Right cardiac atrium (tissue), 5 donors: ENCODE measurements at regions of chr7 and their contacts with region 1.

Region 1: DNA sequence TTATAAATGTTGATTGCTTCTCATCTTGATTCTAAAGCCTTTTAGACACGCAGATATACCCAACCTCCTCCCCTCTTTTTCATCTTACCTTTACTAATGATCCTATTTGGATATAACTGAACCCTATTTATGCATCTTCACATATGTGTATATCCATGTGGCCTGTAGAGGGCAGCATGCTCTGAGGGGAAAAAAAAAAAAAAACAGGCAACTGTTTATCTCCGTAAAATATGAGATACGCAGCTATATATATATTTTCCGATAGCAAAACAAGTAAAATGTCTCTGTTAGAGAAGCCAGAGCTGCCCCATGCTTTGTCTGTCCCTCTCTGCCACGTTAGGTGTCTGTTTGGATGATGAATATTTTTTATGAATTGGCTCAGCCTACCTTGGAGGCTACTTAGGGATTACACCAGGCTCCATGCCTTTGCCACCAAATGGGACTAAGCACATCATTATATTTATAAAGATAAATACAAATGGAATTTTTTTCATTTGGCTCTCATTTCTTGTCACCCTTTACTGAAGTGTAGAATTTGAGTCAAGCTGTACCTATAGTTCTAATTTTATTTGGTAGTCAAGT is 174.8 kb upstream of the FZD1 start:
- DNase-seq: no peak
- ATAC-seq: peak; percentile 46 to 62
- H3K4me3 ChIP-seq: peak overlapping the region; percentile 69
- H3K27ac ChIP-seq: peak overlapping the region; percentile 67
- H3K4me1 ChIP-seq: peaks cover 2% of the 10 kb centered on the region
- H3K27me3 ChIP-seq: no peaks in the 10 kb centered on the region

Region 2: DNA sequence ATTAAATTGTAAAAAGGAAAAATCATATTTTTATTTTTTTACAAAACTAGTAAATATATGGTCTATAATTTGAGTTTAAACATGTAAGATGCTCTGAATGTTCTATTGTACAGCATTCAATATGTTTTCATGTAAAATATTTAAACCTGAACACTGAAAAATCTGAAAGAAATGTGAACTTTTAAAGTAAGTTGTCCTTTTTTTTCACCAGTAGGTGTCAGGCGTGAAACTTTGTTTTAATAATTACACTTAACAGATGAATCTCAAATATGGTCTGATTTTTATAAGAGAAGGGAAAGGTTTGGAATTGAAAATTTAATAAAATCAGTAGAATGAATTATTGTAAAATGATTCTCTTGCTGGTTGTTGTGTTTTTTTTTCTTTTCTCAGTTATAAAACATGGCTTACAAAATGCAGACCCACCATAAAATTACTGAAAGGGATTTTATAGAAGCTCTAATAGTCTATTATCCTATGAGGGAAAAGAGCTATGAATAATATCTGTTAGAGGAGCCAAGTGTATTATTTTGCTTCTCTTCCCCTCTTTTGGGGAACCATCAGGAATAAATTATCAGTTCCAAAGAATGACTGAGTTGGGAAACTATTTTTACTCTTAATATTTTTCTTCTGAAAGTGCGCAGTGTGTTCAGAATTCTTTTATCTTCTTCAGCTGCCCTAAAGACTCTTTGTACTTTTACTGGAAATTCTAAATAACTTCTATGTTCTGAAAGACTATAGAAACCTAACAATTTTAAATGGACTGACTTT is 43.0 kb before region 1 on chr7:
- intact Hi-C with region 1: no loop called
- DNase-seq: no peak
- ATAC-seq: no peak
- H3K4me3 ChIP-seq: no peak overlapping the region
- H3K27ac ChIP-seq: no peak overlapping the region
- H3K4me1 ChIP-seq: peaks cover 2% of the 10 kb centered on the region
- H3K27me3 ChIP-seq: no peaks in the 10 kb centered on the region

Region 3: DNA sequence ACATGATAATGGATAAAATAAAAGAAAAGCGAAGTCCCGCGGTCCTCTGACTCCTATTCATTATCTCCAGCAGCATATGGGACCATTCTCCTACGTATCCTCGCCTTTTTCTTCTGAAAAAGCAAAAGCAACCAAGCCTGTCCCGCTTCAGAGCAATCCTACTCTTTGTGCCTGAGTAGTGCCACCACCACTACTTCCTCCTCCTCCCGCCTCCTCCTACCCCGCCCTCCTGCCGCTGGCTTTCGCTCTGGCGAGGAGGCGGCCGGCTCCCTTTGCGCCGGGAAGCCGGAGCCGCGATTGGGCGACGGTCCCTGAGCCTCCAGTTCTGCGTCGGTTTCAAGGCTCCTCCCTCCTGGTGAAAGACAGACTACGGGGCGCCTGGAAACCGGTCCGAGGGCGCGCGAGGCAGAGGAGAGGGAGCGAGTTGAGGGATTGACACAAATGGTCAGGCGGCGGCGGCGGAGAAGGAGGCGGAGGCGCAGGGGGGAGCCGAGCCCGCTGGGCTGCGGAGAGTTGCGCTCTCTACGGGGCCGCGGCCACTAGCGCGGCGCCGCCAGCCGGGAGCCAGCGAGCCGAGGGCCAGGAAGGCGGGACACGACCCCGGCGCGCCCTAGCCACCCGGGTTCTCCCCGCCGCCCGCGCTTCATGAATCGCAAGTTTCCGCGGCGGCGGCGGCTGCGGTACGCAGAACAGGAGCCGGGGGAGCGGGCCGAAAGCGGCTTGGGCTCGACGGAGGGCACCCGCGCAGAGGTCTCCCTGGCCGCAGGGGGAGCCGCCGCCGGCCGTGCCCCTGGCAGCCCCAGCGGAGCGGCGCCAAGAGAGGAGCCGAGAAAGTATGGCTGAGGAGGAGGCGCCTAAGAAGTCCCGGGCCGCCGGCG is 174.8 kb after region 1 on chr7 and contains the start of gene FZD1:
- intact Hi-C with region 1: loop called in 3 of 4 experiments (anchors 5 to 10 kb)
- DNase-seq: peak; percentile 98 to 99 (median 98)
- ATAC-seq: peak; percentile 96 to 98
- H3K4me3 ChIP-seq: peak within 1 kb of the TSS; percentile 86
- H3K27ac ChIP-seq: peak within 1 kb of the TSS; percentile 93
- H3K4me1 ChIP-seq: peaks cover 3% of the 10 kb centered on the region
- H3K27me3 ChIP-seq: no peaks in the 10 kb centered on the region
- total RNA-seq, gene FZD1: 11.8 to 33.9 (median 27.2) TPM

Region 4: GRCh38 chr7:91784463-91784862 is 695.0 kb after region 1 on chr7:
- intact Hi-C with region 1: loop called in 1 of 4 experiments (anchors 10 kb)
- DNase-seq: no peak
- ATAC-seq: no peak
- H3K4me3 ChIP-seq: no peak overlapping the region
- H3K27ac ChIP-seq: no peak overlapping the region
- H3K4me1 ChIP-seq: no peaks in the 10 kb centered on the region
- H3K27me3 ChIP-seq: no peaks in the 10 kb centered on the region